Caco-2 (cell line): ENCODE measurements at regions of chr19 and their contacts with region 1.

Region 1: GRCh38 chr19:40806488-40807468 is 7.8 kb downstream of the EGLN2 start:
- DNase-seq: peak in 1 of 2 experiments; percentile 76
- H3K4me3 ChIP-seq: no peak overlapping the region
- H3K4me3 Mint-ChIP-seq: no peak overlapping the region
- H3K27ac Mint-ChIP-seq: peak overlapping the region; percentile 87
- H3K4me1 ChIP-seq: peaks cover 13% of the 10 kb centered on the region
- H3K4me1 Mint-ChIP-seq: peaks cover 44% of the 10 kb centered on the region
- H3K27me3 ChIP-seq: no peaks in the 10 kb centered on the region
- H3K27me3 Mint-ChIP-seq: no peaks in the 10 kb centered on the region
- CTCF ChIP-seq: peak; percentile 58 to 66

Region 2: DNA sequence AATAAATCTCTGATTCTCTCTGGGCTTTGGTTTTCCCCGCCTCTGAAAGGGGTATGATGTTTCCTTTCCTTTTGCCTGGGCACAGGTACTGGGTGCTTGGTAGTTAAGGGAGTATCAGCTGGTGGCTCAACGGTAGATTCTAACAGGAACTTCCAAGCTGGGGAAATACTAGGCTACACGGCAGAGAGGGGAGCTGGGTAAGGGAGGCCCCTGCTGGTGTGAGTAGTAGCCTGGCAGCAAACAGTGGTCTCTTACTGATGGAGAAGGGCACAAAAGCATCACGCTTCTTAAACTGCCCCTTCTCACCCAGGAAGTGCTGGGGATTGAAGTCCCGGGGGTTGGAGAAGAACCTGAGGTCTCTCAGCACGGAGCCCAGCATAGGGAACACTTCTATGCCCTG is 102.2 kb after region 1 on chr19:
- CTCF ChIA-PET with region 1: interaction called, 3 read pairs
- POLR2A ChIA-PET with region 1: no interaction called
- intact Hi-C with region 1: loop called (anchors 5 kb)
- DNase-seq: peak; percentile 64 to 71
- H3K4me3 ChIP-seq: no peak overlapping the region
- H3K4me3 Mint-ChIP-seq: no peak overlapping the region
- H3K27ac Mint-ChIP-seq: peak overlapping the region; percentile 42
- H3K4me1 ChIP-seq: no peaks in the 10 kb centered on the region
- H3K4me1 Mint-ChIP-seq: no peaks in the 10 kb centered on the region
- H3K27me3 ChIP-seq: no peaks in the 10 kb centered on the region
- H3K27me3 Mint-ChIP-seq: no peaks in the 10 kb centered on the region
- CTCF ChIP-seq: peak; percentile 25 to 80